OCI-LY7 (cell line): ENCODE measurements at regions of chr2 and their contacts with region 1.

Region 1: GRCh38 chr2:25165992-25166875 is 2.1 kb downstream of the POMC start:
- DNase-seq: peak; percentile 79
- H3K4me3 ChIP-seq: no peak overlapping the region
- H3K27ac ChIP-seq: no peak overlapping the region
- H3K4me1 ChIP-seq: peaks cover 5% of the 10 kb centered on the region
- CTCF ChIP-seq: peak; percentile 85

Region 2: DNA sequence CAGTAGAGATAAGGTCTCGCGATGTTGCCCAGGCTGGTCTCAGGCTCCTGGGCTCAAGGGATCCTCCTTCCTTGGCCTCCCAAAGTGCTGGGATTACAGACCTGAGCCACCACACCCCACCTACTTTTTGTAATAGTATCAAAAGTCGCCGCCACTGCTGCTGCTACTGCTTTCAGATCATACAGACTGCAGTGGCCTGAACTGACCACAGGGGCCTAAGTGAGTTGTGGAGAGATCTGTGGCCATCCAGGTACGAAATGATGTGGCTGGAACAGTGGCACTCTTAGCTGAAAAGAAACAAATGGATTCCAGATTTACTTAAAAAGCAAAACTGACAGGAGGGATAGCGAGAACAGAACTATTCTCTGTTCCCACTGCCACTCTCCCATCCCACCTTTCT is 35.0 kb after region 1 on chr2:
- CTCF ChIA-PET with region 1: interaction called, 6 read pairs
- POLR2A ChIA-PET with region 1: no interaction called
- intact Hi-C with region 1: loop called (anchors 1 kb)
- DNase-seq: no peak
- H3K4me3 ChIP-seq: no peak overlapping the region
- H3K27ac ChIP-seq: no peak overlapping the region
- H3K4me1 ChIP-seq: no peaks in the 10 kb centered on the region
- CTCF ChIP-seq: peak; percentile 50

Region 3: GRCh38 chr2:25228848-25229278 is 62.6 kb after region 1 on chr2:
- CTCF ChIA-PET with region 1: no interaction called
- POLR2A ChIA-PET with region 1: no interaction called
- intact Hi-C with region 1: loop called (anchors 2 kb)
- DNase-seq: peak; percentile 64
- H3K4me3 ChIP-seq: no peak overlapping the region
- H3K27ac ChIP-seq: no peak overlapping the region
- H3K4me1 ChIP-seq: no peaks in the 10 kb centered on the region
- CTCF ChIP-seq: peak; percentile 80